HCT116 (cell line): ENCODE measurements at regions of chr19 and their contacts with region 1.

Region 1: GRCh38 chr19:29155683-29156082 is 57.3 kb downstream of the UQCRFS1 start:
- DNase-seq: no peak
- ATAC-seq: no peak
- H3K4me3 ChIP-seq: no peak overlapping the region
- H3K27ac ChIP-seq: no peak overlapping the region
- H3K4me1 ChIP-seq: no peaks in the 10 kb centered on the region
- H3K27me3 ChIP-seq: no peaks in the 10 kb centered on the region
- CTCF ChIP-seq: no peak
- POLR2A ChIP-seq: no peak
- RAD21 ChIP-seq: no peak

Region 2: DNA sequence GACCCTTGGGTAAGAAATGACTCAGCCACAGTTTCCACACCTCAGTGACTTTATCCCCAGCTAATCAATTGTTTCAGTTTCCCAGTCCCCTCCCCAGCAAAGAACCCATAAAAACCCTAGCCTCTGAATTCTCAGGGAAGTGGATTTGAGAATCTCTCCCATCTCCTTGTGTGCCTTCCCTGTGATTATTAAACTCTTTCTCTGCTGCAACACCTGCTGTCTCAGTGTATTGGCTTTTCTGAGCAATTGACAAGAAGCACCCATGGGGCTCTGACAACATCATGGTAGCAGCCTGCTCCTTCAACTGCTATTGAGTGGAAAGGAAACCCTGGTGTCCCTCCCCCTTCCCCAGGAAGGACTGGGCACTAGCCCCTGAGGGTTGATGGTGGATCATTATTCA is 16.5 kb before region 1 on chr19:
- CTCF ChIA-PET with region 1: no interaction called
- POLR2A ChIA-PET with region 1: no interaction called
- RAD21 ChIA-PET with region 1: no interaction called
- intact Hi-C with region 1: loop called (anchors 2 kb)
- DNase-seq: no peak
- ATAC-seq: no peak
- H3K4me3 ChIP-seq: no peak overlapping the region
- H3K27ac ChIP-seq: no peak overlapping the region
- H3K4me1 ChIP-seq: no peaks in the 10 kb centered on the region
- H3K27me3 ChIP-seq: no peaks in the 10 kb centered on the region
- CTCF ChIP-seq: no peak
- POLR2A ChIP-seq: no peak
- RAD21 ChIP-seq: no peak

Region 3: GRCh38 chr19:29680447-29680846 is 524.8 kb after region 1 on chr19:
- CTCF ChIA-PET with region 1: no interaction called
- POLR2A ChIA-PET with region 1: no interaction called
- RAD21 ChIA-PET with region 1: no interaction called
- intact Hi-C with region 1: no loop called
- DNase-seq: no peak
- ATAC-seq: no peak
- H3K4me3 ChIP-seq: no peak overlapping the region
- H3K27ac ChIP-seq: no peak overlapping the region
- H3K4me1 ChIP-seq: no peaks in the 10 kb centered on the region
- H3K27me3 ChIP-seq: no peaks in the 10 kb centered on the region
- CTCF ChIP-seq: no peak
- POLR2A ChIP-seq: no peak
- RAD21 ChIP-seq: no peak